ENCODE measurements at regions of chr14 and their contacts with region 1.

Region 1: DNA sequence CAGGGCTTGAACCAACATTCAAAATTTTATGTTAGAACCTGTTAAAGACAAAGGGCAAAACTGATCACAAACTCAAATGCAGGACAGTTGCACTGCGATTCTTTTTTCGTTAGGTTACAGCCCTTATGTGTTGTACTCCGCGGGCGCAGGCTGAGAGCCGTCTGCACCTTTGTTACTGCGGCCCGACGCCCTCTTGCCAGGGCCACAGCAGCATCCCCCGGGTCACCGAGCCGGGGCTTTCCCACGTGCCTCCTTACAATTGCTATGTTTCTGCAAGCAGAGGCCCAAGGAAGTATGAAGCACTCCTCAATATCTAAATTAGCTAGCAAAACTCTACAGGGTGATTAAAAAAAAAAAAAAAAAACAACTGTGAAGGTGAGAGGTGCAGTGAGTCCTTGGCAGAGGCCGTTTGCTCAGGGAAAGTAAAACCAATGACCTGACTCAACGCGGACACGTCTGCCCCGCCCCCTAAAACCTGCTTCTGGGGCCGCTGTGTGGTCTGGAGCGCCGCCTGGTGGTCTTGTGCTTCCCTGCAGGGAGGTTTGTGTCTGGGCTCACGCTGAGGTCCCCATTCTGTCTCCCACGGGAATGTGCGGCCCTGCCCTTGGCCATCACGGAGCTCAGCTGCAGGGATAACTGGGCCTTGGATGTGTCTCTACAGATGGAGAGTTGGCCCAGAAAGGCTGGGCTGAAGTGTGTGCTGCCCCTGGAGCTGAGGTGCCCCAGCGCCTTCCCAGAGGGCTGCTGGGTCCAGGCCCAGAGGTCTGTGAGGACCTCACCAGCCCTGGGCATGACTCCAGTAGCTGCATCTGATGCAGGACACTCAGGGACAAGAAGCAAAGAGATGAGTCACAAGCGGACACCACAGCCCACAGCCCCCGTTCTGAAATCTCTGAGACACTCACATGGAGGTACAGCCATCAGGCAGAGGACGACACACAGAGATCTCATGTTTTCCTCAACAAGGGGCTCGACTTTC is 418.5 kb downstream of the TMEM121 start:
- DNase-seq: peak; percentile 73 to 84
- H3K4me3 ChIP-seq: no peak overlapping the region
- H3K4me3 Mint-ChIP-seq: no peak overlapping the region
- H3K27ac Mint-ChIP-seq: no peak overlapping the region
- H3K4me1 ChIP-seq: no peaks in the 10 kb centered on the region; the same call in 1 of the 2 replicates
- H3K4me1 Mint-ChIP-seq: peaks cover 13% of the 10 kb centered on the region
- H3K27me3 ChIP-seq: no peaks in the 10 kb centered on the region
- H3K27me3 Mint-ChIP-seq: no peaks in the 10 kb centered on the region
- CTCF ChIP-seq: peak; percentile 84 to 88

Region 2: GRCh38 chr14:105538165-105539049 is 406.5 kb before region 1 on chr14:
- CTCF ChIA-PET with region 1: interaction called, 10 read pairs
- POLR2A ChIA-PET with region 1: no interaction called
- intact Hi-C with region 1: no loop called
- DNase-seq: no peak
- H3K4me3 ChIP-seq: no peak overlapping the region
- H3K4me3 Mint-ChIP-seq: no peak overlapping the region
- H3K27ac Mint-ChIP-seq: no peak overlapping the region
- H3K4me1 ChIP-seq: no peaks in the 10 kb centered on the region
- H3K4me1 Mint-ChIP-seq: no peaks in the 10 kb centered on the region
- H3K27me3 ChIP-seq: no peaks in the 10 kb centered on the region
- H3K27me3 Mint-ChIP-seq: peaks cover 21% of the 10 kb centered on the region
- CTCF ChIP-seq: no peak

Region 3: DNA sequence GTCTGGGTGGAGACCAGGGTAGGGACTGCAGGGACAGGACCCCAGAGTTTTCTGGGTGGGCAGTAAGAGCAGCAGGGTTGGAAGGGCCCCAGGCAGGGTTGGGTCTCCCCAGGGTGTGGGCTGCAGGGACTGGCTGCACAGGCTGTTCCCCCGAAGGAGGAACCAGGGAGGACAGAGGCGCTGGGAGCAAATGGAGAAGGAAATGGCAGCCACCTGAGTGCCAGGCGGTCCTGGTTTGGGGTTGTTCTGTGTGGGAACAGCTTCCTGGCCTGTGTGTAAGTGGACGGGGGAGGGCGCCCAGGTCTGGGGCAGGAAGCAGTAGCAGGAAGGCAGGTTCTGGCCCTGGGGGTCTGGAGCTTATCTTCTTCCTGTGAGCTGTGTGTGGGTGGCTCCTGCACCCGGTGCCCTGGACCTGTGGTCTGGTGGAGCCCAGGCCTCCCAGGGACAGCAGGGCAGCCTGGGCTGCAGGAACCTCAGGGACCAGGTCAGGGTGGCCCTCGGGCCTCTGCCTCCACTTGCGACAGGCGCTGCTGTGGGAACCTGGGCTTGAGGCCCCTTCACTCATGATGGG is 45.8 kb before region 1 on chr14:
- CTCF ChIA-PET with region 1: no interaction called
- POLR2A ChIA-PET with region 1: no interaction called
- intact Hi-C with region 1: no loop called
- DNase-seq: no peak
- H3K4me3 ChIP-seq: no peak overlapping the region
- H3K4me3 Mint-ChIP-seq: no peak overlapping the region
- H3K27ac Mint-ChIP-seq: no peak overlapping the region
- H3K4me1 ChIP-seq: no peaks in the 10 kb centered on the region
- H3K4me1 Mint-ChIP-seq: no peaks in the 10 kb centered on the region
- H3K27me3 ChIP-seq: no peaks in the 10 kb centered on the region; the same call in 1 of the 2 replicates
- H3K27me3 Mint-ChIP-seq: peaks cover 5% of the 10 kb centered on the region
- CTCF ChIP-seq: no peak

Region 4: DNA sequence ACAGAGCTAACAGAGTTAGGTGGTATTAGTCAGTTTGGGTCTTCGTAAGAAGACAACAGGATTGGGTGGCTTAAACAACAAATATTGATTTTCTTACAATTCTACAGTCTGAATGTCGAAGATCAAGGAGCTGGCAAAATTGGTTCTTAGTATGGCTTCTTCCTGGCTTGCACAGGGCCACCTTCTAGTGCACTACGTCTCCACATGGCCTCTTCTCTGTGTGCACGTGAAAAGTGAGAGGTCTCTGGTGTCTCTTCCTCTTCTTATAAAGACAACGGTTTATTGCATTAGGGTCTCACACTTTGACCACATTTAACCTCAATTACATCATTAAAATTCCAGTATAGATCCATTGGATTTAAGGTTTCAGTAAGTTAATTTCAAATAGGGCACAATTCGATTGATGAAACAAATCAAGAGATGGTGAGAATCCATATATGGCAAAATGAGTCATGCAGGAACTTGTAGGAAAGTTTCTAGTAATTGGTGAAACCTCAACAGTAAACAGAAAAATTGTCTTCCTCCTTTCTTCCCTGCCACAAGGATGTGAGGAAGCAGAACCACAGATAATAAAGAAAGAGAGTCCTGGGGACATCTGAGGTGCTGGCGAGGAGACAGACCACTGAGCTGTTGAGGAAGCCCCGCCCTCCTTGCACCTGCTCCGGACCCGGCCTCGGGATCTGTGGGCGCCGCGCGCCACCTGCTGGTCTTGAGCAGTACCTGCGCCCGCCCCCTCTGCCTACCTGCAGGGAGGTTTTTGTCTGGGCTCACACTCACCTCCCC is 428.1 kb after region 1 on chr14:
- CTCF ChIA-PET with region 1: no interaction called
- POLR2A ChIA-PET with region 1: no interaction called
- intact Hi-C with region 1: no loop called
- DNase-seq: peak; percentile 68 to 83
- H3K4me3 ChIP-seq: no peak overlapping the region
- H3K4me3 Mint-ChIP-seq: no peak overlapping the region
- H3K27ac Mint-ChIP-seq: no peak overlapping the region
- H3K4me1 ChIP-seq: no peaks in the 10 kb centered on the region
- H3K4me1 Mint-ChIP-seq: no peaks in the 10 kb centered on the region
- H3K27me3 ChIP-seq: no peaks in the 10 kb centered on the region
- H3K27me3 Mint-ChIP-seq: peaks cover 18% of the 10 kb centered on the region
- CTCF ChIP-seq: peak; percentile 84 to 94

Measured in Caco-2 (cell line).